HAP-1 (cell line): ENCODE measurements at regions of chr12 and their contacts with region 1.

Region 1: GRCh38 chr12:100733817-100734593 is 60.6 kb upstream of the ANO4 start:
- DNase-seq: peak; percentile 39 to 75
- H3K4me3 ChIP-seq: no peak overlapping the region
- H3K4me1 ChIP-seq: peaks cover 4% of the 10 kb centered on the region; the same call in 1 of the 2 replicates
- H3K27me3 ChIP-seq: no peaks in the 10 kb centered on the region

Region 2: GRCh38 chr12:100672075-100672592 is 61.9 kb before region 1 on chr12:
- in situ Hi-C with region 1: loop called (anchors 5 kb)
- DNase-seq: peak; percentile 28 to 82
- H3K4me3 ChIP-seq: no peak overlapping the region
- H3K4me1 ChIP-seq: no peaks in the 10 kb centered on the region
- H3K27me3 ChIP-seq: no peaks in the 10 kb centered on the region